ENCODE measurements at regions of chr13 and their contacts with region 1.

Region 1: DNA sequence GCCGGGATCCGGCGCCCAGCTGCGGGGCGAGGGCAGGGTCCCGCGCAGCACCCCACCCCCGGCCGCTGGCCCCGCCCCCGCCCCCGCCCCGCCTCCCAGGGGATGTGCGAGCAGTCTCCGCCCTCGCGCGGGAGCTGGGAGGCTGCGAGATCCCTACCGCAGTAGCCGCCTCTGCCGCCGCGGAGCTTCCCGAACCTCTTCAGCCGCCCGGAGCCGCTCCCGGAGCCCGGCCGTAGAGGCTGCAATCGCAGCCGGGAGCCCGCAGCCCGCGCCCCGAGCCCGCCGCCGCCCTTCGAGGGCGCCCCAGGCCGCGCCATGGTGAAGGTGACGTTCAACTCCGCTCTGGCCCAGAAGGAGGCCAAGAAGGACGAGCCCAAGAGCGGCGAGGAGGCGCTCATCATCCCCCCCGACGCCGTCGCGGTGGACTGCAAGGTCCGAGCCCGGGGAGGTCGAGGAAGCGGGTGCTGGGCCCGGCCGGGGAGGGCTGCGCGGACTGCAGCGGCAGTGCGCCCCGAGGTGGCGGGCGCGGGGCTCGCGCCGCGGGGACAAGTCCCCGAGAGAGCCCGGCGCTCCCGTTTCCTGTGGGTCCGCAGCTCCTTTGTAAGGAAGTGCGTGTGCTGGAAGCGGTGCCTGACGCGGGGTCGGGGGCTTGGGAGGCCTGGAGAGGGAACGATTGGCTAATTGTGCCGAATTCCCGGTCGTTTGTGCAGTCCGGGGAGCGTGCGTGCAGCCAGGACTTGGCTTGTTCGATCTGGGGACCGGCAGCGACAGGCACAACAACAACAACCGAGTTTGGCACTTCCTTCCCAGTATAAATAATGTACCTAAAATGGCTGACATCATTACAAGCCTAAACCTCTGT is at the start of gene ITM2B:
- DNase-seq: peak; percentile 65
- ATAC-seq: peak; percentile 95
- H3K4me3 ChIP-seq: peak within 1 kb of the TSS; percentile 83
- H3K27ac ChIP-seq: peak within 1 kb of the TSS; percentile 65
- H3K4me1 ChIP-seq: peaks cover 8% of the 10 kb centered on the region
- H3K27me3 ChIP-seq: peaks cover 6% of the 10 kb centered on the region; the same call in 1 of the 2 replicates
- CTCF ChIP-seq: peak; percentile 36
- POLR2A ChIP-seq: peak; percentile 86
- RAD21 ChIP-seq: no peak
- total RNA-seq, gene ITM2B: 51.1 and 76.9 TPM in 2 replicates

Region 2: DNA sequence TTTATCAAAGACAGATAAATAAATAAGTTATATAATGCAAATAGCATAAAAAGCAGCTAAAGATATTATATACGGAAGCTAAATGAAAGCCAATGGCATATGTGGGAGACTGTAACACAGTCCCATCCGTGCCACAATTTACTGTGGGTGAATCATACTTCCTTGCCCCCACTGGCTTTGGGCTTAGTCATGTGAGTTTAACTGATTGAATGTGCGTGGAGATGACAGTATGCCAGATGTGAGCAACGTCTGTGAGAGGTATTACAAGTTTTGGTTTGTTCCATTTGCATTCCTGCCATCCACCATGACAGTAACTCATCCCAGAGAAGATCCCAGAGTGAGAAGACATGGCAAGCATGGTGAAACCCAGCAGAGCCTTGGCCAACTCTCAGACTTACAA is 572.2 kb before region 1 on chr13:
- CTCF ChIA-PET with region 1: no interaction called
- POLR2A ChIA-PET with region 1: no interaction called
- dilution Hi-C with region 1: no loop called
- in situ Hi-C with region 1: no loop called
- intact Hi-C with region 1: no loop called
- DNase-seq: peak; percentile 85
- ATAC-seq: peak; percentile 57; the same call in 1 of the 2 replicates
- H3K4me3 ChIP-seq: no peak overlapping the region
- H3K27ac ChIP-seq: no peak overlapping the region
- H3K4me1 ChIP-seq: peaks cover 3% of the 10 kb centered on the region; the same call in 1 of the 2 replicates
- H3K27me3 ChIP-seq: no peaks in the 10 kb centered on the region
- CTCF ChIP-seq: no peak
- POLR2A ChIP-seq: no peak
- RAD21 ChIP-seq: no peak

Region 3: GRCh38 chr13:47903836-47904235 is 329.4 kb before region 1 on chr13:
- CTCF ChIA-PET with region 1: no interaction called
- POLR2A ChIA-PET with region 1: no interaction called
- dilution Hi-C with region 1: no loop called
- in situ Hi-C with region 1: no loop called
- intact Hi-C with region 1: no loop called
- DNase-seq: peak; percentile 77
- ATAC-seq: peak; percentile 59
- H3K4me3 ChIP-seq: peak overlapping the region; percentile 7; the same call in 1 of the 2 replicates
- H3K27ac ChIP-seq: no peak overlapping the region
- H3K4me1 ChIP-seq: 0 out of 2 replicates have a peak, but pooled peaks cover 2% of the 10 kb centered on the region
- H3K27me3 ChIP-seq: no peaks in the 10 kb centered on the region
- CTCF ChIP-seq: no peak
- POLR2A ChIP-seq: no peak
- RAD21 ChIP-seq: no peak

Region 4: DNA sequence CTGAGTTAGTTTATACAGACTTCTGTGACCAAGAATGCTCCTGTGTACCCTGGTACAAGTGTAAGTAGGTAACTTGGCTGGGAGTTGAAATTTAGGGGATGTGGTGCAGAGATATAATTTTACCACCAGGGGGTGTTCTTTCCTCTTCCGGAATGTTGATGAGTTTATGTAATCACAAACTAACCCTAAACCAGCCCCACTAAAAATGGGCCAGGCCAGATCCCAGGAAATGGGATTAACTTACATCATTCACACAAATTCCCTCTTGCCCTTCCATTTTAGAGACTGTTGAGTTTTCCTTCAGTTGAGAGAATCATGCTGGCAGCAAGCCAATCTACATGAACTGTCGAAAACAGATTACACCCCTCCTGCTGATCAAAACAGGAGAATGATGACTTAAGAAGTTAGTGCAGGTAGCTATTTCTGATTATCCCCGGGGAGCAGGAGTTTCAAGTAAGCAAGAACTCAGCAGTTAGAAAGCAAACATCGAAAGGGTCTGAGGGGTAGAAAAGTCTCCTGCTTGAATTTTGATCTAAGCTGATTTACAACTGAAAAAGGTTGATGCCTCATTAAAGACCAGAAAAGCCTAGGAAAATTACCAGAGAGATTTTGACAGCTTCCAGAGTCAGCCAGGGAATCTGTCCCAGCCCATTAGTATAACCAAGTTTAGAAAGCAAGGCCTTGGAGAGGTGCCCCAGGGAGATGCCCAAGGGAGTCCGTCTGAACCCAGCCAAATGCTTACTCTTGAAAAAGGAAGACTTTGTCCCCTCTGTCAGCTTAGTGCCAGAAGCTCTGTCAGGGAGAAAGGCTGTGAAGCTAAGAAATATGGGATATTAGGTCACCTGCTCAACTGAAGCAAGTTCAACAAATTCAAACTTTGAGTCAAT is 106.1 kb before region 1 on chr13:
- CTCF ChIA-PET with region 1: no interaction called
- POLR2A ChIA-PET with region 1: no interaction called
- dilution Hi-C with region 1: no loop called
- in situ Hi-C with region 1: no loop called
- intact Hi-C with region 1: loop called (anchors 5 kb)
- DNase-seq: peak; percentile 60
- ATAC-seq: peak; percentile 77
- H3K4me3 ChIP-seq: no peak overlapping the region
- H3K27ac ChIP-seq: no peak overlapping the region
- H3K4me1 ChIP-seq: peaks cover 2% of the 10 kb centered on the region; the same call in 1 of the 2 replicates
- H3K27me3 ChIP-seq: peaks cover 2% of the 10 kb centered on the region; the same call in 1 of the 2 replicates
- CTCF ChIP-seq: peak; percentile 73
- POLR2A ChIP-seq: no peak
- RAD21 ChIP-seq: peak; percentile 60

Region 5: DNA sequence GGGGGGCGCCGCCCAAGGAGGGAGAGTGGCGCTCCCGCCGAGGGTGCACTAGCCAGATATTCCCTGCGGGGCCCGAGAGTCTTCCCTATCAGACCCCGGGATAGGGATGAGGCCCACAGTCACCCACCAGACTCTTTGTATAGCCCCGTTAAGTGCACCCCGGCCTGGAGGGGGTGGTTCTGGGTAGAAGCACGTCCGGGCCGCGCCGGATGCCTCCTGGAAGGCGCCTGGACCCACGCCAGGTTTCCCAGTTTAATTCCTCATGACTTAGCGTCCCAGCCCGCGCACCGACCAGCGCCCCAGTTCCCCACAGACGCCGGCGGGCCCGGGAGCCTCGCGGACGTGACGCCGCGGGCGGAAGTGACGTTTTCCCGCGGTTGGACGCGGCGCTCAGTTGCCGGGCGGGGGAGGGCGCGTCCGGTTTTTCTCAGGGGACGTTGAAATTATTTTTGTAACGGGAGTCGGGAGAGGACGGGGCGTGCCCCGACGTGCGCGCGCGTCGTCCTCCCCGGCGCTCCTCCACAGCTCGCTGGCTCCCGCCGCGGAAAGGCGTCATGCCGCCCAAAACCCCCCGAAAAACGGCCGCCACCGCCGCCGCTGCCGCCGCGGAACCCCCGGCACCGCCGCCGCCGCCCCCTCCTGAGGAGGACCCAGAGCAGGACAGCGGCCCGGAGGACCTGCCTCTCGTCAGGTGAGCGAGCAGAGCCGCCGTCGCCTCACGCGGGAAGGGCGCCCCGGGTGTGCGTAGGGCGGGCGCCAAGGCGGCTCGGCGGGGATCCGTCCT is 70.3 kb after region 1 on chr13 and contains the start of gene RB1:
- CTCF ChIA-PET with region 1: no interaction called
- POLR2A ChIA-PET with region 1: no interaction called
- dilution Hi-C with region 1: no loop called
- in situ Hi-C with region 1: no loop called
- intact Hi-C with region 1: loop called (anchors 2 kb)
- DNase-seq: peak; percentile 87
- ATAC-seq: peak; percentile 92
- H3K4me3 ChIP-seq: peak within 1 kb of the TSS; percentile 59
- H3K27ac ChIP-seq: peak within 1 kb of the TSS; percentile 76
- H3K4me1 ChIP-seq: no peaks in the 10 kb centered on the region
- H3K27me3 ChIP-seq: no peaks in the 10 kb centered on the region
- CTCF ChIP-seq: no peak
- POLR2A ChIP-seq: peak; percentile 90
- RAD21 ChIP-seq: no peak
- total RNA-seq, gene RB1: 15.4 and 23.1 TPM in 2 replicates

Region 6: GRCh38 chr13:48448959-48449614 is 215.8 kb after region 1 on chr13:
- CTCF ChIA-PET with region 1: no interaction called
- POLR2A ChIA-PET with region 1: no interaction called
- dilution Hi-C with region 1: no loop called
- in situ Hi-C with region 1: no loop called
- intact Hi-C with region 1: loop called (anchors 5 kb)
- DNase-seq: peak; percentile 80
- ATAC-seq: peak; percentile 48
- H3K4me3 ChIP-seq: no peak overlapping the region
- H3K27ac ChIP-seq: peak overlapping the region; percentile 92
- H3K4me1 ChIP-seq: peaks cover 17% of the 10 kb centered on the region
- H3K27me3 ChIP-seq: no peaks in the 10 kb centered on the region
- CTCF ChIP-seq: no peak
- POLR2A ChIP-seq: no peak
- RAD21 ChIP-seq: no peak